ENCODE measurements at regions of chr6 and their contacts with region 1.

Region 1: DNA sequence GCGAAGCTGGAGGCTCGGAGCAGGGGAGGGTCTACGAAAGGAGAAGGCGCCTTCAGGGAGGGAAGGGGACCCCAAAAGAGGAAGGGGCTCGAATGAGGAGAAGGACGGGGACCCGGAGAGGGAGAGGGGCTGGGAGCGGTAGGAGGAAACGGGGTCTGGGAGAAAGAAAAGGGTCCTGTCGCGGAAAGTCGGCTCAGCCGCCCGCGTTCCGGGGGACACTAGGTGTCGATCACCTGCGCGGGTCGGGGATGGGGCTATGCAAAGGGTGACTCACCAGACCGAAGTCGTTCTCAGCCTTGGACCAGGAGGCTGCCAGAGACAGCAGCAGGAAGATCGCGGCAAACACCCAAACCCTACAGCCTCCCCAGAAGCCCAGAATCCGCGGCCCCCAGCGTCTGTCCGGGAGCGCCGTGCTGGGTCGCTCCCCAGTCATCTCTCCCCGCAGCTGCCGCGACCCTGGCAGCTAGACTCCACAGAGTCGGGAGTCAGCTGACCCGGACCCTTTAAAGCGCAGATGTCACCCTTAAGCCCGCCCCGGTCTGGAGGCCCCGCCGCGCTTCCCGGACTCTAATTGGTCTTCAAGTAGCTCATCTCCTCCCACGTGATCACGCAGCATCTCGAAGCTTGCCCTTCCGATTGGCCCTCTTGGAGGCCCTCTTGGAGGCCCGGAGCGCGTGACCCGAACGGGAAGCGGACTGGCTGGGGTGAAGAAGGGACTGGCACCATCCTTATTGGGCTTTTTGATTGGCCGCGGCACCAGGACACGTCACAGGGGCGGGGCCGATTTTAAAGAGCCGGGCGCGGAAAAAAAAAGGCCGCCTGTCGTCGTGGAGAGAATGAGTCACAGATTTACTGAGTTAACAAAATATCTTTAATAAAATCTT is at the start of gene NEU1:
- DNase-seq: peak; percentile 100
- ATAC-seq: peak; percentile 97 to 98 (median 98)
- H3K4me3 ChIP-seq: peak within 1 kb of the TSS; percentile 89
- H3K27ac ChIP-seq: peak within 1 kb of the TSS; percentile 91
- H3K4me1 ChIP-seq: peaks cover 9% of the 10 kb centered on the region
- H3K27me3 ChIP-seq: no peaks in the 10 kb centered on the region
- CTCF ChIP-seq: no peak
- total RNA-seq, gene NEU1: 14.2 to 20.6 (median 18.6) TPM

Region 2: DNA sequence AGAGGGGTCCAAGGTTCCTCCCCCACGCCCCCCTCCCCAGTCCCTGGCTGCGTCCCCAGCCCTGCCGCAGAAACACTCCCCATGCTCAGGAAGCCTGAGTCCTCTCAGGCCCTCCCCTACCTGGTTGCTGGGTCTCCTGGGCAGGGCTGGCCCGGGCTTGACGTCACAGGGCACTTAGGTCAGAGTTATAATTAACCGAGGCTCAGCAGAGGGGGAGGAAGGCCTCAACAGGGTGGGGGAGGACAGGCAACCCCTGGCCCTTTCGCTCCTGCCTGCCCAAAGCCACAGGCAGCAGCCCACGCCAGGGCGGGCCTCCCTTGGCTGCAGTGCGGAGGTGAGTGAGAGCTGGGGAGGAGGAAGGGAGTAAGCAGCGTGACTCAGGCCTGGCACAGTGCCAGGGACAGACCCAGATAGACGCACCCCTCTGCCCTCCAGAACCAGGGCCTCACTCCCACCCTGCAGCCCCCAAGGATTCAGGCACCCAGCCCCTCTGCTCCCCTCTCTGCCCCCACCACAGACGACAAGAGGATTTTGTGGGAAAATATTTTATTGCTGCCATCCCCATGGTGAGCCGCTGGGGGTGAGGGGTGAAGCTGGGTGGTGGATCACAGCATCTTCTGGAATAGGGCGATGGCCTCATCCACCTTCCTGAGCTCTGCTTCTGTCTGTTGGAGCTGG is 85.5 kb before region 1 on chr6 and contains the start of gene VWA7:
- intact Hi-C with region 1: loop called in 1 of 2 experiments (anchors 10 kb)
- DNase-seq: peak; percentile 73 to 86
- ATAC-seq: peak; percentile 80 to 89 (median 86)
- H3K4me3 ChIP-seq: peak within 1 kb of the TSS; percentile 55
- H3K27ac ChIP-seq: peak within 1 kb of the TSS; percentile 88
- H3K4me1 ChIP-seq: peaks cover 17% of the 10 kb centered on the region
- H3K27me3 ChIP-seq: no peaks in the 10 kb centered on the region
- CTCF ChIP-seq: no peak
- total RNA-seq, gene VWA7: 5.2 to 8.0 (median 7.5) TPM

Region 3: GRCh38 chr6:31791324-31792089 is 71.1 kb before region 1 on chr6:
- intact Hi-C with region 1: no loop called
- DNase-seq: no peak
- ATAC-seq: peak in 1 of 4 donors; percentile 29
- H3K4me3 ChIP-seq: no peak overlapping the region
- H3K27ac ChIP-seq: no peak overlapping the region
- H3K4me1 ChIP-seq: peaks cover 6% of the 10 kb centered on the region
- H3K27me3 ChIP-seq: no peaks in the 10 kb centered on the region
- CTCF ChIP-seq: peak; percentile 46

Measured in psoas muscle (tissue), 8 donors.